ENCODE measurements at regions of chr11 and their contacts with region 1.

Region 1: DNA sequence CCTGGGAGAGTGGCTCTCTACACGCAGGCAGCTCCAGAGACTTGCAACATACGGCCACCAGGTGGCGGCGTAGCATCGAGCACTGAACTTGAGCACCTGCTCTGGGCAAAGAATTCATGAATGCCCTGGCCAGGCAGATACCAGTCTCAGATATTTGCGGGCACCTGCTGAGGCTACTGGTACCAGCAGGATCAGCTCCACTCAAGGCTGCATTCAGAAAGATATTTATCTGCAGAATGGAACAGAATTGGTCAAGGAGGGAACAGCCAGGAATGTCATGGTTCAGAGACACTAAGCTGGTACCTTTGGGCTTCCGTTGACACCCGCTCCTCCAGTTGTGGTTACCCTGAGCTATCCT is 10.8 kb upstream of the CCDC86 start:
- DNase-seq: peak; percentile 49 to 85
- H3K4me3 ChIP-seq: no peak overlapping the region
- H3K27ac ChIP-seq: no peak overlapping the region
- H3K4me1 ChIP-seq: no peaks in the 10 kb centered on the region
- H3K27me3 ChIP-seq: no peaks in the 10 kb centered on the region; a peak in 1 of 7 replicates
- CTCF ChIP-seq: peak; percentile 88 to 95 (median 92)
- EP300 ChIP-seq: no peak
- POLR2A ChIP-seq: no peak
- RAD21 ChIP-seq: peak; percentile 95 to 97

Region 2: GRCh38 chr11:60334005-60334620 is 497.0 kb before region 1 on chr11:
- CTCF ChIA-PET with region 1: no interaction called
- POLR2A ChIA-PET with region 1: no interaction called
- DNase-seq: peak; percentile 50 to 94
- H3K4me3 ChIP-seq: no peak overlapping the region
- H3K27ac ChIP-seq: no peak overlapping the region
- H3K4me1 ChIP-seq: no peaks in the 10 kb centered on the region; a peak in 2 of 7 replicates
- H3K27me3 ChIP-seq: no peaks in the 10 kb centered on the region
- CTCF ChIP-seq: peak; percentile 27 to 75 (median 72)
- EP300 ChIP-seq: no peak
- POLR2A ChIP-seq: no peak
- RAD21 ChIP-seq: peak; percentile 48 to 65; a peak in 3 of 4 replicates

Region 3: GRCh38 chr11:60762851-60763691 is 68.1 kb before region 1 on chr11:
- CTCF ChIA-PET with region 1: interaction called, 12 read pairs
- POLR2A ChIA-PET with region 1: no interaction called
- DNase-seq: no peak
- H3K4me3 ChIP-seq: no peak overlapping the region
- H3K27ac ChIP-seq: no peak overlapping the region
- H3K4me1 ChIP-seq: peaks cover 0 to 1% (median 0%) of the 10 kb centered on the region in 4 experiments; a peak in 1 of 7 replicates
- H3K27me3 ChIP-seq: peaks cover 0 to 6% (median 3%) of the 10 kb centered on the region in 4 experiments; a peak in 3 of 7 replicates
- CTCF ChIP-seq: peak in 2 of 3 experiments; percentile 47 to 58; a peak in 2 of 4 replicates
- EP300 ChIP-seq: no peak
- POLR2A ChIP-seq: no peak
- RAD21 ChIP-seq: peak; percentile 40 to 48

Region 4: GRCh38 chr11:60801194-60801593 is 29.9 kb before region 1 on chr11:
- CTCF ChIA-PET with region 1: interaction called, 11 read pairs
- POLR2A ChIA-PET with region 1: no interaction called
- DNase-seq: no peak
- H3K4me3 ChIP-seq: no peak overlapping the region
- H3K27ac ChIP-seq: no peak overlapping the region
- H3K4me1 ChIP-seq: no peaks in the 10 kb centered on the region
- H3K27me3 ChIP-seq: peaks cover 0 to 3% (median 0%) of the 10 kb centered on the region in 4 experiments; a peak in 1 of 7 replicates
- CTCF ChIP-seq: peak in 1 of 3 experiments; percentile 3; a peak in 1 of 4 replicates
- EP300 ChIP-seq: no peak
- POLR2A ChIP-seq: no peak
- RAD21 ChIP-seq: no peak

Region 5: DNA sequence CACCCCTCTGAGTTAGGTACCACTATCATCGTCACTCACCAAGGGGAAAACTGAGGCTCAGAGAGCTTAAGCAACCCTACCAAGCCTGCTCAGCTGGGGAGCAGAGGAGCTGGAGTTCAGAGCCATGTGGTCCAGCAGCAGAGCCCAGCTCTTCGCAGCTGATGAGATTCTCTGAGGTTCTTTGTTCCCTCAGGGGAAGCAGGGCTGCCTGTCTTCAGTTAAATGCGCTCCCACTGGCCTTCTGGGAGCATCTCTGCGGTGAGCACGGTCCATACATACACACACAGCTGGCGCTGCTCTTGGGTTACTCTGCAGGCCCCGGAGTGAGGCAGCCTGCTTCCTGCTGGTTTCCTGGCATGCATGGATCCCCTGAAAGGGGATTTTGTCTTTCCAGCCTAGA is 29.8 kb after region 1 on chr11:
- CTCF ChIA-PET with region 1: interaction called, 37 read pairs
- POLR2A ChIA-PET with region 1: no interaction called
- DNase-seq: no peak
- H3K4me3 ChIP-seq: no peak overlapping the region
- H3K27ac ChIP-seq: no peak overlapping the region
- H3K4me1 ChIP-seq: no peaks in the 10 kb centered on the region
- H3K27me3 ChIP-seq: no peaks in the 10 kb centered on the region
- CTCF ChIP-seq: no peak
- EP300 ChIP-seq: no peak
- POLR2A ChIP-seq: no peak
- RAD21 ChIP-seq: no peak

Region 6: GRCh38 chr11:60872961-60873524 is 41.9 kb after region 1 on chr11:
- CTCF ChIA-PET with region 1: interaction called, 44 read pairs
- POLR2A ChIA-PET with region 1: no interaction called
- DNase-seq: peak in 1 of 2 experiments; percentile 60
- H3K4me3 ChIP-seq: no peak overlapping the region
- H3K27ac ChIP-seq: no peak overlapping the region
- H3K4me1 ChIP-seq: peaks cover 0 to 4% (median 0%) of the 10 kb centered on the region in 4 experiments; a peak in 4 of 7 replicates
- H3K27me3 ChIP-seq: no peaks in the 10 kb centered on the region
- CTCF ChIP-seq: no peak
- EP300 ChIP-seq: no peak
- POLR2A ChIP-seq: no peak
- RAD21 ChIP-seq: no peak

Region 7: GRCh38 chr11:60992842-60993409 is 161.8 kb after region 1 on chr11:
- CTCF ChIA-PET with region 1: no interaction called
- POLR2A ChIA-PET with region 1: no interaction called
- DNase-seq: no peak
- H3K4me3 ChIP-seq: no peak overlapping the region
- H3K27ac ChIP-seq: no peak overlapping the region
- H3K4me1 ChIP-seq: no peaks in the 10 kb centered on the region
- H3K27me3 ChIP-seq: peaks cover 0 to 3% (median 0%) of the 10 kb centered on the region in 4 experiments; a peak in 2 of 7 replicates
- CTCF ChIP-seq: no peak
- EP300 ChIP-seq: no peak
- POLR2A ChIP-seq: no peak
- RAD21 ChIP-seq: no peak

Region 8: DNA sequence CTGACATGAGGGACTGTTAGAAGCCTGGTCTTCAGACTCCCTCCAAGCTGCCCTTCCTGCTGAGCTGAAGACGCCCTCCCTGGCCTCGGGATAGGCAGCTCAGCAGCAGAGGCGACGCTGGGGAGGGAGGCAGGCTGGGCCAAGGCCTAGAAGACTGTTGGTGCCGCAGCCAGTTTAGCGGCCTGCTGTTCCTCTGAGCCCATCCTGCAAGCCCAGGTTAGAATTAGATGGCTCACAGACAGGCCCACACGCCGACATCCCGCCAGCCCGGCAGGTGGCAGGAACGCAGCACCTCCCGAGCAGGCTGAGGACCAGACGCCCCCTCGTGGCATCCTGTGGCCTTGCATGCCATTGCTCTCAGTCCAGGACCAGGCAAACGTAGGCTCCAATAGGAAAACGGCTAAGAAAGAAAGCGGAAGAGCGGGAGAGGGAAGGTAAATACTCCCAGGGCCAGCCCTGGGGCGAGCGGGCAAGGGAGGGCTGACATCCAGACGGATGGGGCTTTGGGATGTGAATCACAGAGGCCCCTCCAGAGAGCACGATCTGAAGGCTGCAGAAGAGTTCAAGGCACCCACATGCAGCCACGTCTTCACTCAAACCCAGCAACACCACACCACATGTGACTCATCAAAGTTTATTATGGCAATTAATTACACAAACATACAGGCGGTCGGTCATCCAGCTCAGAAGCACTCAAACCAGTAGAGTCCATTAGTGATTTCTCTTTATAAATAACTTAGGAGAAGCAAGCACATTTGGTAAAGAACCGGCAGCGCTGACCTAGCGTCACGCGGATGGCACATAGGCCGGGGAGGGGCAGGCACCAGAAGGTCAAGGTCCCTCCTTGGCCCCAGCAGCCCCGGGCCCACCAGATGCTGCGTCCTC is 298.8 kb after region 1 on chr11:
- CTCF ChIA-PET with region 1: no interaction called
- POLR2A ChIA-PET with region 1: no interaction called
- DNase-seq: peak; percentile 91 to 98
- H3K4me3 ChIP-seq: no peak overlapping the region
- H3K27ac ChIP-seq: no peak overlapping the region
- H3K4me1 ChIP-seq: peaks cover 0 to 8% (median 5%) of the 10 kb centered on the region in 4 experiments; a peak in 4 of 7 replicates
- H3K27me3 ChIP-seq: no peaks in the 10 kb centered on the region
- CTCF ChIP-seq: peak; percentile 100
- EP300 ChIP-seq: no peak
- POLR2A ChIP-seq: no peak
- RAD21 ChIP-seq: peak; percentile 98

Measured in H1 (cell line).